CD4-positive, alpha-beta memory T cell (primary cell): ENCODE measurements at regions of chr19 and their contacts with region 1.

Region 1: GRCh38 chr19:38831142-38831605 is 420 bp downstream of the ECH1 start:
- DNase-seq: peak in 1 of 5 donors; percentile 57
- H3K4me3 ChIP-seq: peak overlapping the region; percentile 82 to 87
- H3K4me3 Mint-ChIP-seq: peak overlapping the region; percentile 88 to 95 (median 94)
- H3K27ac ChIP-seq: peak overlapping the region; percentile 79
- H3K27ac Mint-ChIP-seq: peak overlapping the region; percentile 92 to 98 (median 95)
- H3K4me1 ChIP-seq: peaks cover 22% of the 10 kb centered on the region
- H3K4me1 Mint-ChIP-seq: peaks cover 17 to 50% (median 32%) of the 10 kb centered on the region in 4 donors
- H3K27me3 ChIP-seq: no peaks in the 10 kb centered on the region
- H3K27me3 Mint-ChIP-seq: no peaks in the 10 kb centered on the region

Region 2: DNA sequence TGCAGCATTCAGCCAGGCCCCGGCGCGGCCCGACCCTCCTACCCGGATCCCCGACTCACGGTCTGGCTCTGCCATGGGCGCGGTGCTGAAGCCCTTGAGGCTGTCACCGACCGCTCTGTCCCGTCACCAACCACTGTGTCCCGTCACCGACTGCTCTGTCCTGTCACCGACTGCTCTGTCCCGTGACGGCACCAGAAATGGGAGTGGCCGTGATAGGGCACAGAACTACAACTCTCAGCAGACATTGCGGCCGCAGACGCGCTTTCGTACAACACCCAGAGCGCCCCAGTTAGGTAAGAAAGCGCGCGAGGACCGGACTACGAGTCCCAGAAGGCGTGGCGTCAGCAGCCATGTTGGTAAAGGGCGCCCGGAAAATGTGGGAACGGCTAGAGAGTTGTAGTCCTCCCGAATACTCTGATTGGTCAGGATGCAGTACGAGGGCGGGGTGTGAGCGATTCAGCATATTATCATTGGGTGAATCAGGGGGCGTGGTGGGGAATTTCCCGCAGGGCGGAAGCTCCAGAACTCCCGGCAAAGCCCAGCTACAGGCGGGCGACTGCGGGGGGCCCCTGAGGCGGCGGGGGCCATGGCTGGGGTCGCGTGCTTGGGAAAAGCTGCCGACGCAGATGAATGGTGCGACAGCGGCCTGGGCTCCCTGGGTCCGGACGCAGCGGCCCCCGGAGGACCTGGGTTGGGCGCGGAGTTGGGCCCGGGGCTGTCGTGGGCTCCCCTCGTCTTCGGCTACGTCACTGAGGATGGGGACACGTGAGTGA is 68.5 kb after region 1 on chr19 and contains the starts of genes NFKBIB and SIRT2:
- CTCF ChIA-PET with region 1: interaction called, 3 read pairs
- POLR2A ChIA-PET with region 1: interaction called, 6 read pairs
- intact Hi-C with region 1: loop called (anchors 1 kb)
- DNase-seq: peak; percentile 98 to 100 (median 100)
- H3K4me3 ChIP-seq: peak within 1 kb of the TSS; percentile 71 to 87
- H3K4me3 Mint-ChIP-seq: peak within 1 kb of the TSS; percentile 92 to 98 (median 96)
- H3K27ac ChIP-seq: peak within 1 kb of the TSS; percentile 99
- H3K27ac Mint-ChIP-seq: peak within 1 kb of the TSS; percentile 90 to 100 (median 99)
- H3K4me1 ChIP-seq: peaks cover 34% of the 10 kb centered on the region
- H3K4me1 Mint-ChIP-seq: peaks cover 17 to 59% (median 39%) of the 10 kb centered on the region in 4 donors
- H3K27me3 ChIP-seq: no peaks in the 10 kb centered on the region
- H3K27me3 Mint-ChIP-seq: no peaks in the 10 kb centered on the region
- total RNA-seq, gene NFKBIB: 23.9 to 26.0 TPM
- total RNA-seq, gene SIRT2: 47.0 to 50.0 TPM